Naive thymus-derived CD4-positive, alpha-beta T cell (primary cell): ENCODE measurements at regions of chr2 and their contacts with region 1.

Region 1: GRCh38 chr2:128090945-128091725 is at the start of gene UGGT1:
- DNase-seq: peak; percentile 75 to 94 (median 92)
- ATAC-seq: peak; percentile 99
- H3K4me3 ChIP-seq: peak within 1 kb of the TSS; percentile 86
- H3K4me3 Mint-ChIP-seq: peak within 1 kb of the TSS; percentile 88 to 98 (median 94)
- H3K27ac ChIP-seq: peak within 1 kb of the TSS; percentile 75
- H3K27ac Mint-ChIP-seq: peak within 1 kb of the TSS; percentile 91 to 97 (median 94)
- H3K4me1 ChIP-seq: peaks cover 13 to 18% of the 10 kb centered on the region in 2 donors
- H3K4me1 Mint-ChIP-seq: peaks cover 27 to 60% (median 56%) of the 10 kb centered on the region in 7 donors
- H3K27me3 ChIP-seq: no peaks in the 10 kb centered on the region
- H3K27me3 Mint-ChIP-seq: no peaks in the 10 kb centered on the region
- total RNA-seq, gene UGGT1: 38.1 to 75.6 (median 46.6) TPM

Region 2: DNA sequence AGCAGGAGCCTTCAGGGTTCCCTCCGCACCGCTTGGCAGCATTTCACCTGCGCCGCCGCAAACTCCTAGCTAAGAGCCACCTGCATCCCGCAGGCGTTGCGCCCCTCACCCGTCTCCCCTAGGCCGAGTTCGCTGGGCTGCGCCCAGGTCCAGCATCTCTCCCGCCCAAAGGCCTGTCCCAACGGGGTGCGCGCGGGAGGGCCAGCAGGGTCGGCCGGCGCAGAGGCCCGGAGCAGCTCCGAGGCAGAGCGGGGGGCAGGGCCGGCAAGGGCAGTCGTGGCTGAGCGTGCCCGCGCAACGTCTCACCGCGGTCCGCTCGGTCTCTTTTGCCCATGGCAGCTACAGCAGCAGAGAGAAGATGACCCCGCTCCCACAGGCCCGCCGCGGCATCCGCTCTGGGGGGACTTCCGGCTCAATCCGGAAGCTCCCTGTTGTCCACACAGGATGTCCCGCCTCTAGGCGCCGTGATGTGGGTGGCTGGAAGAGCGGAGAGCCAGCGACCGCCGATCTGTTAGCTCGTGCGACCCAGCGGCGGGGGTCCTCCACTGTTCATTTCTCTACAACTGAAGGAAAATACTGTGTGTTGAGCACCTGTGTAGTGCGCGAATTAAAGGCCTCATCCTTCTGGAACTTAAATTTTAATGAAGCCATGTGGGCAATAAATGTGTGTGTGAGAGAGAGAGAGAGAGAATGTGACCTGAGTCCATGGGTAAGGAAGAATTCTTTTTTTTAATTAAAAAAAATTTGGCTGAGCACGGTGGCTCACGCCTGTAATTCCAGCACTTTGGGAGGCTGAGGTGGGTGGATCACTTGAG is 797.2 kb before region 1 on chr2 and contains the start of gene ERCC3:
- CTCF ChIA-PET with region 1: no interaction called
- POLR2A ChIA-PET with region 1: interaction called, 5 read pairs
- intact Hi-C with region 1: loop called in 1 of 2 experiments (anchors 5 kb)
- DNase-seq: peak; percentile 54 to 81 (median 72)
- ATAC-seq: peak; percentile 93
- H3K4me3 ChIP-seq: peak within 1 kb of the TSS; percentile 87
- H3K4me3 Mint-ChIP-seq: peak within 1 kb of the TSS; percentile 92 to 99 (median 98)
- H3K27ac ChIP-seq: peak within 1 kb of the TSS; percentile 86
- H3K27ac Mint-ChIP-seq: peak within 1 kb of the TSS; percentile 77 to 97 (median 95)
- H3K4me1 ChIP-seq: peaks cover 8 to 12% of the 10 kb centered on the region in 2 donors
- H3K4me1 Mint-ChIP-seq: peaks cover 18 to 49% (median 37%) of the 10 kb centered on the region in 7 donors
- H3K27me3 ChIP-seq: no peaks in the 10 kb centered on the region
- H3K27me3 Mint-ChIP-seq: no peaks in the 10 kb centered on the region
- total RNA-seq, gene ERCC3: 43.4 to 71.5 (median 56.8) TPM

Region 3: DNA sequence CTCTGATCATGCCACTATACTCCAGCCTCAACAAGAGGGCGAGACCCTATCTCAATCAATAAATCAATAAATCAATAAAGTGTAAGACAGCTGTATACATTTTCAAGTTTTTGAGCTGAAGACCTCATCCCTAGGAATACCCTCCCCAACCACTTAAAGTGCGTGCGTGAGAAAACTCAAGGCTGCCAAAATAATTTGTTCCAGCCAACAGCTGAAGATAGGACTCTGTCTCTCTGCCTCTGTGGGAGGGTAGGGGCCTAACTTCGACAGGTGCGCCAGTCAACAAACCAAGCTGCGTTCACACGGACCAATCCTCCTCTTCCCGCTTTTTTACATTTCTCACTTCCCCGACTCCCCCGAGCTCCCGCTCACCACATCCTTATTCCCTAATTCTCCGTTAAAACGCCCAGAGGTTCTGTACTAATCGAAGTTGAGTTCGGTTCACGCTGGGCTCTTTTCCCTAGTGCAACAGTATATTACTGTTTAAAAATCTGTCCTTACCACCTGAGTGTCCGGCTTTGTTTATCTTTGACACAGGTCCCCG is 233.8 kb before region 1 on chr2:
- CTCF ChIA-PET with region 1: no interaction called
- POLR2A ChIA-PET with region 1: interaction called, 3 read pairs
- intact Hi-C with region 1: loop called (anchors 1 to 10 kb)
- DNase-seq: no peak
- ATAC-seq: no peak
- H3K4me3 ChIP-seq: peak overlapping the region; percentile 98
- H3K4me3 Mint-ChIP-seq: peak overlapping the region; percentile 84 to 99 (median 94)
- H3K27ac ChIP-seq: peak overlapping the region; percentile 86
- H3K27ac Mint-ChIP-seq: peak overlapping the region; percentile 29 to 97 (median 90)
- H3K4me1 ChIP-seq: peaks cover 22 to 25% of the 10 kb centered on the region in 2 donors
- H3K4me1 Mint-ChIP-seq: peaks cover 22 to 68% (median 44%) of the 10 kb centered on the region in 7 donors
- H3K27me3 ChIP-seq: no peaks in the 10 kb centered on the region
- H3K27me3 Mint-ChIP-seq: no peaks in the 10 kb centered on the region

Region 4: GRCh38 chr2:127884436-127885345 is 206.4 kb before region 1 on chr2:
- CTCF ChIA-PET with region 1: no interaction called
- POLR2A ChIA-PET with region 1: interaction called, 3 read pairs
- intact Hi-C with region 1: loop called (anchors 10 kb)
- DNase-seq: peak in 1 of 9 donors; percentile 7
- ATAC-seq: no peak
- H3K4me3 ChIP-seq: peak overlapping the region; percentile 43
- H3K4me3 Mint-ChIP-seq: peak overlapping the region; percentile 78 to 100 (median 92)
- H3K27ac ChIP-seq: peak overlapping the region; percentile 55
- H3K27ac Mint-ChIP-seq: peak overlapping the region; percentile 75 to 94 (median 89)
- H3K4me1 ChIP-seq: peaks cover 15 to 24% of the 10 kb centered on the region in 2 donors
- H3K4me1 Mint-ChIP-seq: peaks cover 36 to 73% (median 66%) of the 10 kb centered on the region in 7 donors
- H3K27me3 ChIP-seq: no peaks in the 10 kb centered on the region
- H3K27me3 Mint-ChIP-seq: no peaks in the 10 kb centered on the region

Region 5: GRCh38 chr2:128027801-128028667 is 63.1 kb before region 1 on chr2 and contains the start of gene SAP130:
- CTCF ChIA-PET with region 1: no interaction called
- POLR2A ChIA-PET with region 1: interaction called, 39 read pairs
- intact Hi-C with region 1: loop called (anchors 1 to 2 kb)
- DNase-seq: peak; percentile 96 to 99 (median 98)
- ATAC-seq: peak; percentile 86
- H3K4me3 ChIP-seq: peak within 1 kb of the TSS; percentile 86
- H3K4me3 Mint-ChIP-seq: peak within 1 kb of the TSS; percentile 87 to 98 (median 98)
- H3K27ac ChIP-seq: peak within 1 kb of the TSS; percentile 91
- H3K27ac Mint-ChIP-seq: peak within 1 kb of the TSS; percentile 52 to 97 (median 93)
- H3K4me1 ChIP-seq: peaks cover 0 to 14% of the 10 kb centered on the region in 2 donors
- H3K4me1 Mint-ChIP-seq: peaks cover 14 to 32% (median 28%) of the 10 kb centered on the region in 7 donors
- H3K27me3 ChIP-seq: no peaks in the 10 kb centered on the region
- H3K27me3 Mint-ChIP-seq: peaks cover 0 to 16% (median 0%) of the 10 kb centered on the region in 5 donors
- total RNA-seq, gene SAP130: 29.9 to 38.0 (median 30.9) TPM

Region 6: GRCh38 chr2:129877289-129877779 is 1786.2 kb after region 1 on chr2:
- CTCF ChIA-PET with region 1: no interaction called
- POLR2A ChIA-PET with region 1: no interaction called
- intact Hi-C with region 1: loop called in 1 of 2 experiments (anchors 10 kb)
- DNase-seq: peak; percentile 61 to 82 (median 78)
- ATAC-seq: peak; percentile 95
- H3K4me3 ChIP-seq: peak overlapping the region; percentile 96
- H3K4me3 Mint-ChIP-seq: peak overlapping the region; percentile 86 to 99 (median 96)
- H3K27ac ChIP-seq: peak overlapping the region; percentile 78
- H3K27ac Mint-ChIP-seq: peak overlapping the region; percentile 77 to 97 (median 92)
- H3K4me1 ChIP-seq: peaks cover 5 to 7% of the 10 kb centered on the region in 2 donors
- H3K4me1 Mint-ChIP-seq: peaks cover 6 to 18% (median 13%) of the 10 kb centered on the region in 7 donors
- H3K27me3 ChIP-seq: no peaks in the 10 kb centered on the region
- H3K27me3 Mint-ChIP-seq: peaks cover 0 to 2% (median 0%) of the 10 kb centered on the region in 5 donors